ENCODE measurements at regions of chr4 and their contacts with region 1.

Region 1: DNA sequence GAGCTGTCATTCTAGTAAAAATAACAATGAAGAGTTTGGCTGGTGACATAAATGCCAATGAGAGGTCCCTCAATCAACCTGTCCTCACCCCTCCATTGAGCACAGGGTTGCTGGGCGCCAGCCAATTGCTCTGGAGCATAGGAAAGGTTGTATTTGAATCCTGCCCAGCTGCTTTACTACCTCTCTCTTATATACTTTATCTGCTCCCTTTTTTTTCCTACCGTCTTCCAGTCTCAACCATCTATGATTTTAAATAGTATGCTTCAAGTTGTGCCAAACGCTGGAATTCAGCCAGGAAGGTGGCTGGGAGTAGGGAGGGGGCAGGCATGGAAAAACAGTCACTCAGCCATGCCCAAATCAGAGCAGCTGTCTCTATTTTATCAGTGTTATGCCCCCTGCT is 153.8 kb downstream of the NR3C2 start:
- DNase-seq: peak; percentile 38 to 60
- ATAC-seq: peak in 7 of 8 donors; percentile 36 to 90 (median 66)
- H3K4me3 ChIP-seq: no peak overlapping the region
- H3K27ac ChIP-seq: peak overlapping the region in 1 of 10 donors; percentile 32
- H3K4me1 ChIP-seq: peaks cover 0 to 65% (median 46%) of the 10 kb centered on the region in 9 donors
- H3K27me3 ChIP-seq: no peaks in the 10 kb centered on the region
- CTCF ChIP-seq: no peak

Region 2: DNA sequence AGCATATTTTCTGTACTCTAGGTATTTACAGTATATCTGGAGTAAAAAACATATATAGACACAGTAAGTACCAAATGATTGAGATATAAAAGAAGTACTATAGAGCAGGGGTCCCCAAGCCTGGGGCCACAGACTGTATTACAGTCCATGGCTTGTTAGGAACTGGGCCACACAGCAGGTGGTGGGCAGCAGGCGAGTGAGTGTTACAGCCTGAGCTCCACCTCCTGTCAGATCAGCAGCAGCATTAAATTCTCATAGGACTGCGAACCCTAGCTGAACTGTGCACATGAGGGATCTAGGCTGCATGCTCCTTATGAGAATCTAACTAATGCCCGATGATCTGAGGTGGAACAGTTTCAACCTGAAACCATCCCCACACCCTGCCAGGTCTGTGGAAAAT is 146.9 kb before region 1 on chr4:
- intact Hi-C with region 1: no loop called
- DNase-seq: no peak
- ATAC-seq: no peak
- H3K4me3 ChIP-seq: no peak overlapping the region
- H3K27ac ChIP-seq: no peak overlapping the region
- H3K4me1 ChIP-seq: no peaks in the 10 kb centered on the region
- H3K27me3 ChIP-seq: no peaks in the 10 kb centered on the region
- CTCF ChIP-seq: no peak

Region 3: GRCh38 chr4:149031399-149031798 is 743.0 kb after region 1 on chr4:
- intact Hi-C with region 1: loop called in 1 of 10 experiments (anchors 10 kb)
- DNase-seq: no peak
- ATAC-seq: peak in 2 of 8 donors; percentile 38 to 57
- H3K4me3 ChIP-seq: no peak overlapping the region
- H3K27ac ChIP-seq: no peak overlapping the region
- H3K4me1 ChIP-seq: no peaks in the 10 kb centered on the region
- H3K27me3 ChIP-seq: no peaks in the 10 kb centered on the region
- CTCF ChIP-seq: peak in 8 of 9 donors; percentile 22 to 61 (median 46)